Naive thymus-derived CD8-positive, alpha-beta T cell (primary cell): ENCODE measurements at regions of chr5 and their contacts with region 1.

Region 1: GRCh38 chr5:177390363-177391300 is 6.4 kb downstream of the SLC34A1 start:
- DNase-seq: peak; percentile 73 to 93 (median 88)
- ATAC-seq: peak; percentile 83
- H3K4me3 Mint-ChIP-seq: peak overlapping the region in 8 of 10 donors; percentile 23 to 79 (median 55)
- H3K27ac Mint-ChIP-seq: peak overlapping the region; percentile 46 to 94 (median 82)
- H3K4me1 Mint-ChIP-seq: peaks cover 21 to 47% (median 39%) of the 10 kb centered on the region in 4 donors
- H3K27me3 Mint-ChIP-seq: peaks cover 0 to 4% (median 0%) of the 10 kb centered on the region in 5 donors

Region 2: DNA sequence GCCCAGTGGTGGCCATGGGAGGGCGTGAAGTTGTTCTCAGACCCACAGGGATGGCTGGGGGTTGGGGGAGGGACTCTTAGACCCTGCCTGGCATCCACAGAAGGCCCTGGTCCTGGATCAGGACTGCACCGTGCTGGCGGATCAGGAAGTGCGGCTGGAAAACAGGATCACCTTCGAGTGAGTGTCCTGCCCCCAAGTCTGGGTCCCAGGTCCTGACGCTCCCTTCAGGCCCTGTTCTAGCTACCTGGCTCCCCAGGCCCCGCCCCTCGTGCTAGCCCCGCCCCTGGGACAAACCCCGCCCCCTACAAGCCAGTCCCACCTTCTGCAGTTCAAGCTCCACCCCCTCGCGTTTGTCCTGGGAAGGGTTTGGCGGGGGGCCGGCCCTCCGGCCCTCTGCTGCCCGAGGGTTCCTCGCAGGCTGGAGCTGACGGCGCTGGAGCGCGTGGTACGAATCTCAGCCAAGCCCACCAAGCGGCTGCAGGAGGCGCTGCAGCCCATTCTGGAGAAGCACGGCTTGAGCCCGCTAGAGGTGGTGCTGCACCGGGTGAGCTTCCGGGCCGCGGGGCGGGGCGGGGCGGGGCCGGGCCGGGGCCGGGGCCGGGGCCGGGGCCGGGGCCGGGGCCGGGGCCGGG is 20.0 kb before region 1 on chr5:
- POLR2A ChIA-PET with region 1: interaction called, 66 read pairs
- DNase-seq: peak in 7 of 10 donors; percentile 45 to 82 (median 57)
- ATAC-seq: peak; percentile 77 to 80
- H3K4me3 Mint-ChIP-seq: peak overlapping the region in 5 of 10 donors; percentile 45 to 77 (median 61)
- H3K27ac Mint-ChIP-seq: peak overlapping the region in 5 of 10 donors; percentile 57 to 92 (median 85)
- H3K4me1 Mint-ChIP-seq: peaks cover 38 to 81% (median 75%) of the 10 kb centered on the region in 4 donors
- H3K27me3 Mint-ChIP-seq: no peaks in the 10 kb centered on the region

Region 3: GRCh38 chr5:177425801-177426565 is 35.4 kb after region 1 on chr5:
- POLR2A ChIA-PET with region 1: interaction called, 10 read pairs
- DNase-seq: peak; percentile 94 to 100 (median 100)
- ATAC-seq: peak; percentile 82 to 84
- H3K4me3 Mint-ChIP-seq: peak overlapping the region; percentile 82 to 98 (median 94)
- H3K27ac Mint-ChIP-seq: peak overlapping the region; percentile 92 to 100 (median 98)
- H3K4me1 Mint-ChIP-seq: peaks cover 28 to 58% (median 49%) of the 10 kb centered on the region in 4 donors
- H3K27me3 Mint-ChIP-seq: no peaks in the 10 kb centered on the region

Region 4: DNA sequence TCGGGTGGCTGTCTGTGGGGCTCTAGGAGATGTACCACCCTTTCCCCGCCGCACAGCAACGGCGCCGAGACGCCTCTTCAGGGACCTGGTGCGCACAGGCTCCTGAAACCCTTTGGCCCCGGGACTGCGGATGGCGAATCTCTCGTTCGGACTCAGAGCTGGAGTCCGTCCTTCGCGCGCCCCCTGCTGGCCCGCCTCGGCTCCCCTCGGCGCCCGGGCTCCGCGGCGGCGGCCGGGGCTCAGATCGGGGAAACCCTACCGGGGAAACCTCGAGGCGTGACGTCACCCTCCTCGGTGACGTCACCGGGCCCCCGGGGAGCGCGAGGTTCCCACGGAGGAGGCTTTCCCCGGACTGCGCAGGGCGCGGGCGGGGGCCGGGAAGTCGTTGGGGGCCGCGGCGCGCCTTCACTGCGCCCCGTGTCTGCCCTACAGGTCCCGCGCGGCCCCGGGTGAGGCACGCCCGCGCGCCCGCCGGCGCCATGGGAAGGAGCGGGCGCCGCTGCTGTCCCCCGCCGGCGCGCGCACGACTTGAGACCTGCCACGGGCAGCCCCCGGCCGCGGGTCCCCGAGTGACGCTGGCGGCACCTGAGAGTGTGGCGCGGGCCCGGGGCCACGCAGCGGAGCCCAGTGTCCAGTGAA is 63.9 kb after region 1 on chr5:
- POLR2A ChIA-PET with region 1: interaction called, 87 read pairs
- DNase-seq: peak; percentile 84 to 98 (median 94)
- ATAC-seq: peak; percentile 46 to 56
- H3K4me3 Mint-ChIP-seq: peak overlapping the region; percentile 33 to 93 (median 84)
- H3K27ac Mint-ChIP-seq: peak overlapping the region in 8 of 10 donors; percentile 67 to 98 (median 90)
- H3K4me1 Mint-ChIP-seq: peaks cover 14 to 41% (median 28%) of the 10 kb centered on the region in 4 donors
- H3K27me3 Mint-ChIP-seq: no peaks in the 10 kb centered on the region